ENCODE measurements at regions of chr10 and their contacts with region 1.

Region 1: GRCh38 chr10:5500910-5501309 is 1.5 kb upstream of the CALML5 start:
- DNase-seq: no peak
- ATAC-seq: peak; percentile 70
- H3K4me3 ChIP-seq: no peak overlapping the region
- H3K27ac ChIP-seq: no peak overlapping the region
- H3K4me1 ChIP-seq: peaks cover 63% of the 10 kb centered on the region
- H3K27me3 ChIP-seq: peaks cover 5 to 50% of the 10 kb centered on the region in 2 experiments; a peak in 4 of 5 replicates
- CTCF ChIP-seq: peak; percentile 42
- EP300 ChIP-seq: no peak
- POLR2A ChIP-seq: no peak
- RAD21 ChIP-seq: no peak

Region 2: GRCh38 chr10:5518138-5518537 is 17.2 kb after region 1 on chr10:
- CTCF ChIA-PET with region 1: no interaction called
- POLR2A ChIA-PET with region 1: no interaction called
- in situ Hi-C with region 1: no loop called
- intact Hi-C with region 1: loop called (anchors 2 kb)
- DNase-seq: peak; percentile 84
- ATAC-seq: peak; percentile 86
- H3K4me3 ChIP-seq: 0 out of 6 replicates have a peak overlapping the region, but pooled peaks of 1 of the 3 experiments have one; percentile 4
- H3K27ac ChIP-seq: peak overlapping the region; percentile 45
- H3K4me1 ChIP-seq: peaks cover 66% of the 10 kb centered on the region
- H3K27me3 ChIP-seq: no peaks in the 10 kb centered on the region
- CTCF ChIP-seq: no peak
- EP300 ChIP-seq: peak in 1 of 2 experiments; percentile 68; a peak in 2 of 4 replicates
- POLR2A ChIP-seq: no peak
- RAD21 ChIP-seq: no peak

Measured in HepG2 (cell line).